Activated naive CD4-positive, alpha-beta T cell treated with anti-CD3 and anti-CD28 coated beads for 36 hours (primary cell): ENCODE measurements at regions of chr22 and their contacts with region 1.

Region 1: GRCh38 chr22:19891317-19892256 is 36.9 kb upstream of the GNB1L start:
- DNase-seq: peak; percentile 95
- H3K4me3 Mint-ChIP-seq: peak overlapping the region; percentile 74
- H3K27ac Mint-ChIP-seq: peak overlapping the region; percentile 95
- H3K4me1 Mint-ChIP-seq: peaks cover 80% of the 10 kb centered on the region
- H3K27me3 Mint-ChIP-seq: no peaks in the 10 kb centered on the region

Region 2: GRCh38 chr22:19522190-19522880 is 369.3 kb before region 1 on chr22:
- CTCF ChIA-PET with region 1: no interaction called
- intact Hi-C with region 1: no loop called
- DNase-seq: no peak
- H3K4me3 Mint-ChIP-seq: no peak overlapping the region
- H3K27ac Mint-ChIP-seq: no peak overlapping the region
- H3K4me1 Mint-ChIP-seq: peaks cover 18% of the 10 kb centered on the region
- H3K27me3 Mint-ChIP-seq: peaks cover 17% of the 10 kb centered on the region

Region 3: DNA sequence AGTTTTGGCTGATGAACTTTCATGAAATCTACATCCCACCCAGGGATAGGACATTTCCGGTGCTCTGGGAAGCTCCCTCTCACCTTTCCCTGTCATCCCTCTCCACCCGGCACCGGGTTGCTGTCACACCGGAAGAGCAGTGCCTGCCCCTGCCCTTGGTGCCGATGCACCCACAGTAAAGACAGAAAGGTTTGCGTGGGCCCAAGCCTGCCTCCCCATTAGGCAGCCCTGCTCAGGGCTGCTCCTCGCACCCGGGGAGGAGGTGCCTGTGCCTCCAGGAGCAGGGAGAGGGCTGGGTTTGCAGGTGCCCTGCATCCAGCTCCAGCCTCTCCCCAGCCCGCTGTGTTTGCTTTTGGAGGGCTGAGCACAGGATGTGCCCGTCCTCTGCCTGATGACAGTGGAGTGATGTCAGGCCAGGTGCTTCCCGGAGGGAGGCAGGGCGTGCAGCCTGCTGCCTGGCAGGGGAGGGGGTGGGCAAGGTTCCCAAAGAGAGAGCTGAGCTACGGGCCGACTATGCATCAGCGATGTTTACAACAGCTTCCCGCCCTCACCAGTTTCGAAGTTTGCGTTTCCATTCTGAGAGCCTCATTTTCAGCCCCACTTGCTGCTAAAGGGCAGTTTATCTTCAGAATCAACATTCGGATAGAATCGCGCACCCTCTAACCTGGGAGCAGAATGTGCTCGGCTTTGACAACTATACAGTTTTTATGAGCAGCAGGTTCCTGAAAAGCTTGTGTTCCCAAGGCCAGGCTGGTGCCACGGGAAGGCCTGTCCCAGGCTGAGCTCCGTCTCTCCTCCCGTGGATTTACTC is 284.2 kb before region 1 on chr22:
- CTCF ChIA-PET with region 1: no interaction called
- intact Hi-C with region 1: loop called (anchors 5 kb)
- DNase-seq: peak; percentile 94
- H3K4me3 Mint-ChIP-seq: peak overlapping the region; percentile 57
- H3K27ac Mint-ChIP-seq: peak overlapping the region; percentile 76
- H3K4me1 Mint-ChIP-seq: peaks cover 62% of the 10 kb centered on the region
- H3K27me3 Mint-ChIP-seq: no peaks in the 10 kb centered on the region

Region 4: DNA sequence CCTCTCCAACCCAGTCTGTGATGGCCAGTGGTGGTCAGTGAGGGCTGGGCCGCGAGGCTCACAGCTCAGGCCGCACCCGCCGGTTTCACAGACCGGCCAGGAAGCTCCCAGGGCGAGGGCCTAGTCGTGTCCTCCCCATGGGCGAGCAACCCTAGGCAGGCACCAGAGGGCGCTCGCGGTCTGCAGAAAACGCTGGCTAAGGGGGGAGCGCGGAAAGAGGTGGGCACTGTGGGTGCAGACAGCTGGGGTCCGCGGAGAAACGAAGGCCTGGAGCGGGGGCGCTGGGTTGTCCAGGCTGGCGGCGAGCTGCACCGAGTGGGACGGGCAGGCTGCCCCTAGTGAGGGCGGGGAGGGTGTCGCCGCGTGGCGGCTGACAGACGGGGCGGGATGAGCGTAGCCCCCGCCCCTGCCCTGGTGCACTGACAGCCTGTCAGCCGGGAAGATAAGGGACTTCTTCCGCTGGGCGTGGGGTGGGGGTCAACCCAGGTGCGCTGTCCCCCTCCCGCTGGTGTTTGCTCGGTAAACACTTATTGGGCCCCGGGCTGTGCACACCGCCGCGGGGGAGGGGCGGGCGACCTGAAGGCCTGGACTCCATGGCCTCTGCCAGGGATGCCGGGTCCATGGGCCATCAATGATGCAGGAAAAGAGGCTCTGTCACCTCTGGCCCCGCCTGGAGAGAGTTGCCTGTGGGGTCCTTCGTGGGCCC is 160.8 kb before region 1 on chr22:
- CTCF ChIA-PET with region 1: interaction called, 15 read pairs
- intact Hi-C with region 1: loop called (anchors 5 kb)
- DNase-seq: peak; percentile 87
- H3K4me3 Mint-ChIP-seq: peak overlapping the region; percentile 74
- H3K27ac Mint-ChIP-seq: no peak overlapping the region
- H3K4me1 Mint-ChIP-seq: no peaks in the 10 kb centered on the region
- H3K27me3 Mint-ChIP-seq: no peaks in the 10 kb centered on the region

Region 5: GRCh38 chr22:19756288-19757128 is 135.1 kb before region 1 on chr22:
- CTCF ChIA-PET with region 1: interaction called, 7 read pairs
- intact Hi-C with region 1: loop called (anchors 1 kb)
- DNase-seq: peak; percentile 83
- H3K4me3 Mint-ChIP-seq: peak overlapping the region; percentile 9
- H3K27ac Mint-ChIP-seq: no peak overlapping the region
- H3K4me1 Mint-ChIP-seq: peaks cover 32% of the 10 kb centered on the region
- H3K27me3 Mint-ChIP-seq: peaks cover 46% of the 10 kb centered on the region

Region 6: DNA sequence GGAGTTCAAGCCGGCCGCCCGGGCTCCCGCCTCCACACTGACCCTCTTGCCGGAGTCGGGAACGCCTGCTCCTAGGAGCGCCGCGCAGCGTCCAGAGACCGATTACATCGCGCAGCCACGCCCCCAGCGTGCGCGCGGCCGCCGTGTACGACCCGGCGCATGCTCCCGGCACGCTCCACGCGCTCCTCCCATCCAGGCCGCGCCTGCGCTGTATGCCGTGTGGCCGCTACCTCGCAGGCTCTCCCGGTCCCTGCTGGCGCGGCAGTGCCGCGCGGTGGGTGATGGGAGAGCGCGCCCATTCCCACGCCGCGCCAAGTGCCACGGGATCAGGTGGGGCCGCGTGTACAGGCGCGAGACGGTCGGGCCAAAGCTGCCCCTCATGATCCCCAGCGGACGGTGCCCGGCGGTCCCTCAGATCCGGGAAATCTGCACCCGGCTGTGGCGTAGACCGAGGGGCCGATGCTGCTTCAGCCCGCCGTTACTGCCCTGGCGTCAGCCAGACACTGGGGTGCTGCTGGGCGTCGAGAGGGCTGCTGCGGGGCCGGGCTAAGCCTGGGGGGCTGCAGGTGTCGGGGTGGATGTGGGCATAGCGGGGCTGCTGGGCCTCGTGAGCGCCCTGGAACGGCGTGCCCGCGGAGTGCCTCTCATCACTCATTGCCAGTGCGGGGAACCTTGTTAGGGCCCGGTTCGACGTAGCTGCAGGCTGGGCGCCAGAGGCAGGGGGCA is 36.6 kb before region 1 on chr22 and contains the starts of genes GNB1L and RTL10:
- CTCF ChIA-PET with region 1: interaction called, 5 read pairs
- intact Hi-C with region 1: loop called (anchors 1 kb)
- DNase-seq: peak; percentile 96
- H3K4me3 Mint-ChIP-seq: peak within 1 kb of the TSS; percentile 95
- H3K27ac Mint-ChIP-seq: peak within 1 kb of the TSS; percentile 98
- H3K4me1 Mint-ChIP-seq: peaks cover 53% of the 10 kb centered on the region
- H3K27me3 Mint-ChIP-seq: no peaks in the 10 kb centered on the region
- total RNA-seq, gene GNB1L: 8.8 to 9.8 TPM
- total RNA-seq, gene RTL10: 10.9 to 11.9 TPM

Region 7: DNA sequence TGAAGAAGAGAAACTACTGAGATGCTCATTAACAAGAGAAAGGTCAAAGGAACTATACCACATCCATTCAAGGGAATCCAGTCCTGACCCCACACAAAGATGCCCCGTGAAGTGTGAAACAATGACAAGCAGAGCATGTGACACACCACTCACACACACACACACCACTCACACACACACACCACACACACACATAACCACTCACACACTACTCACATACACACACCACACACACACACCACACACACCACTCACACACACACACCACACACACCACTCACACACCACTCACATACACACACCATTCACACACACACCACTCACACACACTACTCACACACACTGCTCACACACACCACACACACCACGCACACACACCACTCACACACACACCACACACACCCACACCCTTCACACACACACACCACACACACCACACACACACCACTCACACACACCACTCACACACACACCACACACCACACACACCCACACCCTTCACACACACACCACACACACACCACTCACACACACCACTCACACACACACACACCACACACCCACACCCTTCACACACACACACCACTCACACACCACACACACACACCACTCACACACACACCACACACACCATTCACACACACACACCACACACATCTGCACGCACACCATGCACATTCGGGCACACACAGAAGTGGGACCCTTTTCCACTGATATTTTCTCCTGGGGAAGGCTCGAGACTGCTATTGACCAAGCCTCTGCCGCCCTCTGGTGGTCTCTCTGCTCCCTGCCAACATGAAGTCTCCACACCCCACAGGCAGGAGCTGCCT is 18.0 kb after region 1 on chr22:
- CTCF ChIA-PET with region 1: interaction called, 5 read pairs
- intact Hi-C with region 1: loop called (anchors 2 kb)
- DNase-seq: peak; percentile 93
- H3K4me3 Mint-ChIP-seq: no peak overlapping the region
- H3K27ac Mint-ChIP-seq: peak overlapping the region; percentile 42
- H3K4me1 Mint-ChIP-seq: peaks cover 2% of the 10 kb centered on the region
- H3K27me3 Mint-ChIP-seq: no peaks in the 10 kb centered on the region

Region 8: GRCh38 chr22:19941365-19942082 is 49.9 kb after region 1 on chr22 and contains the starts of genes COMT and TXNRD2:
- CTCF ChIA-PET with region 1: interaction called, 3 read pairs
- intact Hi-C with region 1: loop called (anchors 1 kb)
- DNase-seq: peak; percentile 77
- H3K4me3 Mint-ChIP-seq: peak within 1 kb of the TSS; percentile 96
- H3K27ac Mint-ChIP-seq: peak within 1 kb of the TSS; percentile 93
- H3K4me1 Mint-ChIP-seq: peaks cover 29% of the 10 kb centered on the region
- H3K27me3 Mint-ChIP-seq: no peaks in the 10 kb centered on the region
- total RNA-seq, gene COMT: 53.7 to 56.8 TPM
- total RNA-seq, gene TXNRD2: 22.9 to 23.6 TPM